ENCODE measurements at regions of chr2 and their contacts with region 1.

Region 1: GRCh38 chr2:187581125-187581896 is 27.1 kb upstream of the TFPI start:
- DNase-seq: peak; percentile 13
- H3K27ac ChIP-seq: no peak overlapping the region
- CTCF ChIP-seq: peak; percentile 58

Region 2: GRCh38 chr2:187499941-187500532 is 81.3 kb before region 1 on chr2:
- CTCF ChIA-PET with region 1: interaction called, 70 read pairs
- POLR2A ChIA-PET with region 1: no interaction called
- DNase-seq: peak; percentile 42
- H3K27ac ChIP-seq: no peak overlapping the region
- CTCF ChIP-seq: peak; percentile 81